ENCODE measurements at regions of chr10 and their contacts with region 1.

Region 1: GRCh38 chr10:93630625-93631557 is 18.6 kb downstream of the PDE6C start:
- DNase-seq: no peak
- H3K4me3 ChIP-seq: no peak overlapping the region
- CTCF ChIP-seq: no peak

Region 2: GRCh38 chr10:93573051-93573909 is 57.6 kb before region 1 on chr10:
- in situ Hi-C with region 1: loop called (anchors 5 kb)
- DNase-seq: no peak
- H3K4me3 ChIP-seq: no peak overlapping the region
- CTCF ChIP-seq: no peak

Region 3: GRCh38 chr10:93656155-93656554 is 25.3 kb after region 1 on chr10:
- in situ Hi-C with region 1: loop called (anchors 5 kb)
- DNase-seq: no peak
- H3K4me3 ChIP-seq: no peak overlapping the region
- CTCF ChIP-seq: no peak

Measured in astrocyte of the cerebellum (primary cell).